OCI-LY7 (cell line): ENCODE measurements at regions of chr6 and their contacts with region 1.

Region 1: DNA sequence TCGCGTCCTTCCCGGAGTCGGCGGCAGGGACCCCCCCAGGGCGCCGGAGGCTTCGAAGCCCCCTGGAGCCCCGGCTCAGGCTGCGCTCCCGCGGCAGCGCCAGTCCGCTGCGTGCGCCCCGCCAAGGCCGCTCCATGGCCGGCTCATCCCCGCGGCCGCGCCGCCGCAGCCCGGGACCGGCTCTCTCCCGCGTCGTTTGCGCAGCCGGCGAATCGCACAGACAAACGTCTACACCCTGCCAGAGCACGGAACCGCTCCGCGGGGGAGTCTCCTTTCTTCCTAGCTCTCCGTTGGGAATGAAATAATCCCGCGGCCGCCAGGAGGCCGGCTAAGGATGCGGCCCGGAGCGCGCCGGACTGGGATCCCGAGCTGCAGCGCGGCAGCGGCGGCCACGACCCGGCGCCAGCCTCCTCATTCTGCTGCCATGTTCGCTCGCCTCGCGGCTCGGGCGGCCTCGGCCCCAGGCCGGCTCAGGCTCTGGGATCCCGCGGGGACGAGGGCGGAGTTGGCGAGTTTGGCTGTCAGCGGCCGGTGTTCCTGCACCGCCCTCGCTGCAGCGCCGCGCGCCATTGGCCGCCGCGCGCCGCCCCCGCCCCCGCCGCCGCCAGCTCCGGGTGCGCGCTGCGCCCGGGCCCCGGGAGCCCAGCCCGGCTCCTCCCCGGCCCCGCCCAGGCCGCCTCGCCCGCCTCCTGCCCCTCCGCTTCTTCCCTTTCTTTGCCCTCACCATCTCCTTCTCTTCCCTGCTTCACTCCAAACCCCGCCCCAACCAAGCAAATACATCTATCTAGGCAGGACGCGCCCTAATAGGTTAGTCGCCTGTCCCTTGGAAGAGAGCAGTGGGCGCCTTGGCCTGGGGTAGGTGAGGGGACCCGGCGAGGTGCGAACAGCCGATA is at the start of gene GFOD1:
- DNase-seq: peak; percentile 91
- H3K4me3 ChIP-seq: peak within 1 kb of the TSS; percentile 74
- H3K27ac ChIP-seq: peak within 1 kb of the TSS; percentile 70
- H3K4me1 ChIP-seq: peaks cover 30% of the 10 kb centered on the region
- CTCF ChIP-seq: no peak
- total RNA-seq, gene GFOD1: 19.7 and 22.6 TPM in 2 replicates

Region 2: GRCh38 chr6:13375360-13375878 is 111.9 kb before region 1 on chr6:
- CTCF ChIA-PET with region 1: interaction called, 3 read pairs
- POLR2A ChIA-PET with region 1: interaction called, 4 read pairs
- intact Hi-C with region 1: loop called (anchors 5 kb)
- DNase-seq: peak; percentile 72
- H3K4me3 ChIP-seq: peak overlapping the region; percentile 13
- H3K27ac ChIP-seq: peak overlapping the region; percentile 30
- H3K4me1 ChIP-seq: peaks cover 59% of the 10 kb centered on the region
- CTCF ChIP-seq: no peak

Region 3: DNA sequence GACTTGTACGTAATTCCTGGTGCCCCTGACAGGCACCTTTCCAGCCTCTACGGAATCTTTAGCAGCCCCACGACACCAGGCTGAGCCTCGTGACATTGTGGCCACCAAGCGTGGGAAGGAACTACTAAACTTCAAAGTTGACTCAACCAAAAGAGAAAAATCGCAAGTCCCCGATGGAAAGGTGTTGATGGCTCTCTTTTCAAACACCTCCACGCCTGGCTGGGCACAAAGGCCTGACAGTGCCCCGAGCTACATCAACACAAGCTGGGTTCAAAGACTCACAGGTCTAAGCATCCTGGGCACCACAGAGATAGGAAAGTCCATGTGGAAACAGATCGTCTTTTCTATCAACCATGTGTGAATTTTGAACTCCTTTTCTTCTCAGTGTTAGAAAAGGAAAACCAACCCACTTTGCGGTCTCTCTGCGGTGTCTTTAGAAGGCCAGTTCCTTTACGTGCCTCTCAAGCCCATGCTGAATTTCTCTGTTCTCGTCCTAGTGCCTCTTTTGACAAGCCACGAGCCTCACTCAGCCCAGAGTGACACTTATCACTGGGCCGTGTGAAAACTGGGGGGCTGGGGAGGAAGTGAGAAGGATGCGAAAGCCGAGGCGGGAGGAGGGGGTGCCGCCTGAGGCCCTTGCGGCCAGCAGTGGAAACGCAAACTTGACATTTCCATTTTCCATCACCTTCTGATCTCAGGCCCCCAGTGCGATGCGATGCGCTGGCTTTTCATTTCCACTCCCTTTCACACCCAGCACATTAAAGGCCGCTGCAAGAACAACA is 59.4 kb before region 1 on chr6:
- CTCF ChIA-PET with region 1: no interaction called
- POLR2A ChIA-PET with region 1: interaction called, 8 read pairs
- intact Hi-C with region 1: loop called (anchors 2 kb)
- DNase-seq: peak; percentile 72
- H3K4me3 ChIP-seq: peak overlapping the region; percentile 6
- H3K27ac ChIP-seq: peak overlapping the region; percentile 15
- H3K4me1 ChIP-seq: peaks cover 61% of the 10 kb centered on the region
- CTCF ChIP-seq: peak; percentile 62

Region 4: DNA sequence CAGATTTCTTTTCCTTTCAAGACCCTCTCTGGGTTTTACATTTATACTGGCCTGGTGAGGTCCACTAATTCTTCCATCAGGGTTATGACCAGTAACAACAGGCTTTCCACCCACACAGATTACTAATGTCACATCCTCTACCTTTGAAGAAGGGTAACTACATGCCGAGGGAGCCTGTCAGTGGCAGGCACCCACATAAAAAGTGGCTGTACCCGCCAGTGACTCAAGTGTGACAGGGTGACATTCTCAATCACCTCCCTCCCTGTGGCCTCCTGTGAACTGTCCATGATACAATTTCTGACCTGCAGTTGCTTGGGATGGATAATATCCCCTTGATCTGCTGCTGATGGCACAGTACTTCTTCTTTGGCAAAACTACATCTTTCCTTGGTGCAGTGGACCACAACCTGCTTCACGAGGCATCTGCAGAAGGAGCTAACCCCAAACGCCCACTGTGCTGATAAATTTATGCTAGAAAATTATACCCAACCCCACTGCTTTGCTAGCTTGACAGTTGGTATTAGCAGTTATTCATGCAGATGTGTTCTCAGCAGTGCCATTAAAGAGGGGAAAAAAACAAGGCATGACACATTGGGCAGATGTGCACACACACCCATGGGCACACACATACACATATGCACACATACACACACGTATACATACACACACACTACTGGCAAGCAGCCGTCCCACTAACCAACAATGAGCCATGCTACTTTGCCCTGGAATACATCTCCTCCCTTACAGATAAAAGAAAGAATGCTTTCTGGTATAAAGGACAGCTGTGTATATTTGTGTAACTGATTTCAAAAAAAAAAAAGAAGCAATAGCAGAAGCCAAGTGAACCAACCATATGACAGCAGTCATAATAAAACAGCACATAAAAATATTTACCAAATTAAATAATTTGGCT is 20.8 kb before region 1 on chr6:
- CTCF ChIA-PET with region 1: interaction called, 6 read pairs
- POLR2A ChIA-PET with region 1: interaction called, 14 read pairs
- intact Hi-C with region 1: loop called (anchors 1 kb)
- DNase-seq: no peak
- H3K4me3 ChIP-seq: peak overlapping the region; percentile 2
- H3K27ac ChIP-seq: no peak overlapping the region
- H3K4me1 ChIP-seq: peaks cover 79% of the 10 kb centered on the region
- CTCF ChIP-seq: no peak

Region 5: GRCh38 chr6:13538084-13538483 is 50.7 kb after region 1 on chr6:
- CTCF ChIA-PET with region 1: no interaction called
- POLR2A ChIA-PET with region 1: interaction called, 6 read pairs
- intact Hi-C with region 1: loop called (anchors 1 kb)
- DNase-seq: peak; percentile 69
- H3K4me3 ChIP-seq: no peak overlapping the region
- H3K27ac ChIP-seq: no peak overlapping the region
- H3K4me1 ChIP-seq: peaks cover 65% of the 10 kb centered on the region
- CTCF ChIP-seq: peak; percentile 85

Region 6: DNA sequence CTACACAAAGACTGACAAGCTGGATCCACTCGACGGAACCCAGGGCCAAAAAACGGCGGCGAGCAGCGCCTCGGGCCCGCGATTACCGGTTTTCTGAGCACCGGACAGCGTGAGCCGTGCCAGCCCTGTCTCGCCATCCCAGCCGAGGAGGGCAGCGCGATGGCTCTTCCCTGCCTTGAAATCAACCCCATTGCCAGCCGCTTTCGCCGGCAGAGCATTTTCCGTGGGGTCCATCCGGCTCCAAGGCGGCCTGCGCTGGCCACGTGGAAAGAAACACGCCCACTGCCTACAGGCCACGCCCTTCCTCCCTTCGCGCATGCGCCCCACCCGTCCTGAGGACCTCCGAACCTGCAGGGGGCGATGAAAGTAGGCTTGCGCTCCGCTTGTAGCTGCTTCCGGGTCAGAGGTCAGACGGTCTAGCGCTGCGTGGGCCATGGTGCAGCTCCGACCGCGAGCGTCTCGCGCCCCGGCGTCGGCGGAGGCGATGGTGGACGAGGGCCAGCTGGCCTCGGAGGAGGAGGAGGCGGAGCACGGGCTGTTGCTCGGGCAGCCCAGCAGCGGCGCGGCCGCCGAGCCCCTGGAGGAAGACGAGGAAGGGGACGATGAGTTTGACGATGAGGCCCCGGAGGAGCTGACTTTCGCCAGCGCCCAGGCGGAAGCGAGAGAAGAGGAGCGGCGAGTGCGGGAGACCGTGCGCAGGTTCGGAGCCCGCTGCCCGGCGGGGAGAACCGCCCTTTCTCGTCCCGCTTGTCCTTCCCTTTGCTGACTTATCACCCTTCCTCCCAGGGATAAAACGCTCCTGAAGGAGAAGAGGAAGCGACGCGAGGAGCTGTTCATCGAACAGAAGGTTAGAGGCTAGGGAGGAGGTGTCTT is 127.8 kb after region 1 on chr6 and contains the start of gene NOL7:
- CTCF ChIA-PET with region 1: interaction called, 4 read pairs
- POLR2A ChIA-PET with region 1: no interaction called
- intact Hi-C with region 1: loop called (anchors 2 kb)
- DNase-seq: peak; percentile 99
- H3K4me3 ChIP-seq: peak within 1 kb of the TSS; percentile 98
- H3K27ac ChIP-seq: peak within 1 kb of the TSS; percentile 73
- H3K4me1 ChIP-seq: peaks cover 54% of the 10 kb centered on the region
- CTCF ChIP-seq: peak; percentile 81
- total RNA-seq, gene NOL7: 67.5 and 92.4 TPM in 2 replicates